ENCODE measurements at regions of chr6 and their contacts with region 1.

Region 1: DNA sequence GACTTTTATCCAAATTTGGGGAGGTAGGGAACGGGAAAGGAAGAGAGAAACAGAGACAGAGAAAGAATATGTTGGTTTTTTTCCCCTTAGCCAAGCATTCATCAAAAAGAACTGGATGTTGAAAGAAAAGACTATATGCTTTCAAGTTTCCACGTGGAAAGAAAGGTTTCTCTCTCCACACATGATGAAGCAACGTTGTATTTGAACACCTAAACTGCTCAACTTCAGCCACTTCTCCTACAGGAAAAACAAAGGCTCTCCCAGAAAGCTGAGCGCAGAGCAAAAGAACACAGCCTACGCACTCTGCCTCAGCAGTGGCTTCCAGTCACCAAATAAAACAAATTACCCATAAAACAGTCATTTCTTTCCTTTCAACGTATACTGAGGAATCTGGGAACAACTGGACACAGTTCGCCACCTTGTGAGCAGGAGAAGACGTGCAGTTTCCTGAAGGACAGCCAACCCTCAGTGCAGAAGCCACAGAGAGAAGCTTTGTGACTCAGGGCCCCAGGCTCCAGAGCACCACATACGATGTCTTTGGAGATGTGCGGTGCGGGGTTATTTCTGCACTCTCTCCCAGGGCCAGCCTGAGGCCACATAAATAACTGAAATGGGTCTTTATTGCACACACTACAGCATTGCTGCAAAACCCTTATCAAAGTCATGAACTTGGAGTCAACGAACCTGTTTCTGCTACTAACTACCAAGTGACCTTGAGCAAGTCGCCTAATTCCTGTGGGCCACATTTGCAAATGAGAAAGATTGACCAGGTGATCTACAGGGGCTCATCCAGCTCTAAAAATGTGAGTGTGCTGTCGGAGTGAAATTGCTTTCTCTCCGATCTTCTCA is 10.1 kb downstream of the IL17F start:
- DNase-seq: peak; percentile 16 to 52 (median 45)
- H3K4me3 ChIP-seq: no peak overlapping the region
- H3K27ac ChIP-seq: no peak overlapping the region
- H3K4me1 ChIP-seq: peaks cover 0 to 3% (median 0%) of the 10 kb centered on the region in 4 experiments
- H3K27me3 ChIP-seq: no peaks in the 10 kb centered on the region

Region 2: GRCh38 chr6:52162940-52163908 is 71.0 kb before region 1 on chr6:
- CTCF ChIA-PET with region 1: interaction called, 30 read pairs
- POLR2A ChIA-PET with region 1: no interaction called
- DNase-seq: peak; percentile 61 to 78 (median 78)
- H3K4me3 ChIP-seq: no peak overlapping the region
- H3K27ac ChIP-seq: no peak overlapping the region
- H3K4me1 ChIP-seq: peaks cover 0 to 6% (median 2%) of the 10 kb centered on the region in 4 experiments
- H3K27me3 ChIP-seq: no peaks in the 10 kb centered on the region

Region 3: DNA sequence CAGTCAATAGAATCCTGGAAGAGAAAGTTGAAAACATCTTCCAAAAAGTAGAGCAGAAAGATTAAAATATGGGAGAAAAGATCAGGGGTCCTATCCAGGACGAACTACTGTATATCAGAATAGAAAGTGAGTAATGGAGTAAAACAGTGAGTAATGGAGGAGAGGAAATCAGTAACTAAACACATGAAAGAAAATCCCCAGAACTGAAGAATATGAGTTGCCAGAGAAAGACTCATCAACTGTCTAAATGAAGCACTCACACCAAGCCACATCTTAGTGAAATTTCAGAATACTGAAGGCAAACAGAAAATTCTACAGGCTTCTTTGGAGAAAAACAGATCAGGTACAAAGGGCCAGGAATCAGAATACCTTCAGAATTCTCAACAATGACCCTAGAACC is 33.2 kb before region 1 on chr6:
- CTCF ChIA-PET with region 1: no interaction called
- POLR2A ChIA-PET with region 1: no interaction called
- DNase-seq: no peak
- H3K4me3 ChIP-seq: no peak overlapping the region
- H3K27ac ChIP-seq: no peak overlapping the region
- H3K4me1 ChIP-seq: no peaks in the 10 kb centered on the region
- H3K27me3 ChIP-seq: no peaks in the 10 kb centered on the region

Measured in common myeloid progenitor, CD34-positive (primary cell).